ENCODE measurements at regions of chr6 and their contacts with region 1.

Region 1: GRCh38 chr6:32244946-32245398 is 21.1 kb upstream of the NOTCH4 start:
- DNase-seq: peak; percentile 87
- CTCF ChIP-seq: peak; percentile 94

Region 2: GRCh38 chr6:32413427-32414047 is 168.6 kb after region 1 on chr6:
- in situ Hi-C with region 1: loop called (anchors 10 kb)
- DNase-seq: peak; percentile 78
- CTCF ChIP-seq: peak; percentile 84

Region 3: DNA sequence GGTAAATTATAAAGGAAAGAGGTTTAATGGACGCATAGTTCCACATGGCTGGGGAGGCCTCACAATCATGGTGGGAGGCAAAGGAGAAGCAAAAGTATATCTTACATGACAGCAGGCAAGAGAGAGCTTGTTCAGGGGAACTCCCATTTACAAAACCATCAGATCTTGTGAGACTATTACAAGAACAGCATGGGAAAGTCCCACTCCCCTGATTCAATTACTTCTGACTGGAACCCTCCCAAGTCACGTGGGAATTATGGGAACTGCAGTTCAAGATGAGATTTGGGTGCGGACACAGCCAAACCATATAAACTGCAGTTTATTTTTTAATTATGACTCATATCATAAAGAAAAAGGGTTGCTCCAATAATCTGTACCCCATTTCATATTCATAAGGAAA is 473.9 kb after region 1 on chr6:
- in situ Hi-C with region 1: loop called (anchors 10 kb)
- DNase-seq: no peak
- CTCF ChIP-seq: no peak

Region 4: DNA sequence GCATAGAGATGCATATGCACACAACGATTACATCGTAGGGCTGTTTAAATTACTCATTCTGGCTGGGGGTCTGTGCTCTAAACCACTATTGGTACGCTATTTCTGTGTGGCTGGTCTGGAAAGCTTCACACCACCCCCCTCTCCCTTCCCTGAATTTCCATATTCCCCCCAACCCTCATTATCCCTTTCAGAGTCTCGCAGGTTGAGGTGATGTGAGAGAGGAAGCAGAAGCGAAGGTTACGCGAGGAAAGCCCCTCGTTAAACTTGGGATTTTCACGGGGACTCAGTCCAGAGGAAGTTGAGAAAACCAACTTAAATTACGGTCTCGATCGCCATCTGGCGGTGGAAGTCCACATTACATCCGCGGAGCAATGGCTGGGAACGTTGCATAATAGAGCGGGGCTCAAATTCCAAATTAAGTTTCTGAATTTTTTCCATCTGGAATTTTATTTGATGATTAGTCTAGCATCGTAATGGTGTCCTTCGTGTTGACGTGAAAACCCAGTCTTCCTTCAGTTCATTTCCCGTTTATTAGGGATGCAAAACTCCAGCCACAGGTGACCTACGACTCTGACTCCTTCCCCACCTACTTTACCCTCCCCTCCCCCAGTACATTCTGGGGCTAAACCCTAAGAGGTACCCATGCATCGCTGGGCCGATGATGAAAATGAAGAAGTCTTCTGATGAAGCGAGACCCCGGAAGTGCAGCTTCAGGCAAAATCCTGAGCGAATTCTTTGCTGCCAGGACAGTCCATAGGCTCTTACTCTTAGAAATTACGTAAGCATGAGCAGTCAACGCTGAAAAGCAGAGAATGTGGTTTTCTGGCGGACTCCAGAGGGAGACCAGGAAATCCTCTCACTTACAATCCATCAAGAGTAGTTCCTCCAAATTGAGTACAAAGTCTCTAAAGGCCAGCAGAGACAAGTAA is 552.1 kb after region 1 on chr6:
- in situ Hi-C with region 1: loop called (anchors 25 kb)
- DNase-seq: peak; percentile 53
- CTCF ChIP-seq: peak; percentile 93

Measured in GM13976 (cell line).